ENCODE measurements at regions of chr19 and their contacts with region 1.

Region 1: DNA sequence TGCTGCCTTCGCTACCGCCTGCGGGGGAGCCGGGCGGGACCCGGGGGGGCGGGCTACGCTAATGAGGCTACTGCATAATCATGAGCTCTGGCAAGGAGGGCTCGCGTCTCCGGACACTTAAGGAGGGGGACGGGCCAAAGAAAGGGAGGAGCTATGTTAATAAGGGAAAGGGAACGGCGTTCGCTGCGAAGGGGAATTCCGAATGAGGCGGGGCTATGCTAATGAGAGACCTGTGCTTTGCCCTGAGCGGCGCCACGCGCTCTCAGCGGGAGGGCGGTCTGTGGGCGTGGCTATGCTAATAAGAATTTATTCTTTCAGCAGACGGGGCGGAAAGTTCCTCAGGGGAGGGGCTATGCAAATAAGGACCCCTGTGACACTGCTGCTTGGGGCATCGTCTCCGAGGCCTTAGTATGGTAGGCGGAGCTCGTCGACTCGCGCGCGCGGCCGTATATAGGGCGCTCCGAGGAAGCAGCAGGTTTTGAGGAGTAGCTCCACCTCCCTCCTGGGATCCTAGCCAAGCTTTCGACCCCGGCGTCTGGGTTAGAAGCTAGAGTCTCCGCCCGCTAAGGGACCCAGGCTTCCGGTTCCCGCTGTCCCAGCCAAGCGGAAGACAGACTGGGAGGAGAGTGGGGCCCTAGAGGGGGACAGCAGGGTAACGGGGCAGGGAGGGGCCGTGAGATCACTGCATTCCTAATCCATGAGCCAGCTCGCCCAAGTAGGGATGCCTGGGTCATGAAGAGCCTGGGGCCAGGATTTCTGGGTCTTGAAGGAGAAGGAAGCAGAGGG is at the start of gene RRAS:
- DNase-seq: peak; percentile 100
- ATAC-seq: peak; percentile 75
- H3K4me3 Mint-ChIP-seq: peak within 1 kb of the TSS; percentile 92
- H3K27ac Mint-ChIP-seq: peak within 1 kb of the TSS; percentile 99
- H3K4me1 Mint-ChIP-seq: peaks cover 36% of the 10 kb centered on the region
- H3K27me3 Mint-ChIP-seq: no peaks in the 10 kb centered on the region
- CTCF ChIP-seq: no peak
- total RNA-seq, gene RRAS: 6.3 to 7.1 TPM

Region 2: GRCh38 chr19:49391581-49392399 is 248.5 kb before region 1 on chr19:
- CTCF ChIA-PET with region 1: no interaction called
- POLR2A ChIA-PET with region 1: no interaction called
- intact Hi-C with region 1: no loop called
- DNase-seq: peak; percentile 82
- ATAC-seq: peak; percentile 86
- H3K4me3 Mint-ChIP-seq: no peak overlapping the region
- H3K27ac Mint-ChIP-seq: peak overlapping the region; percentile 23
- H3K4me1 Mint-ChIP-seq: peaks cover 10% of the 10 kb centered on the region
- H3K27me3 Mint-ChIP-seq: no peaks in the 10 kb centered on the region
- CTCF ChIP-seq: peak; percentile 93

Region 3: DNA sequence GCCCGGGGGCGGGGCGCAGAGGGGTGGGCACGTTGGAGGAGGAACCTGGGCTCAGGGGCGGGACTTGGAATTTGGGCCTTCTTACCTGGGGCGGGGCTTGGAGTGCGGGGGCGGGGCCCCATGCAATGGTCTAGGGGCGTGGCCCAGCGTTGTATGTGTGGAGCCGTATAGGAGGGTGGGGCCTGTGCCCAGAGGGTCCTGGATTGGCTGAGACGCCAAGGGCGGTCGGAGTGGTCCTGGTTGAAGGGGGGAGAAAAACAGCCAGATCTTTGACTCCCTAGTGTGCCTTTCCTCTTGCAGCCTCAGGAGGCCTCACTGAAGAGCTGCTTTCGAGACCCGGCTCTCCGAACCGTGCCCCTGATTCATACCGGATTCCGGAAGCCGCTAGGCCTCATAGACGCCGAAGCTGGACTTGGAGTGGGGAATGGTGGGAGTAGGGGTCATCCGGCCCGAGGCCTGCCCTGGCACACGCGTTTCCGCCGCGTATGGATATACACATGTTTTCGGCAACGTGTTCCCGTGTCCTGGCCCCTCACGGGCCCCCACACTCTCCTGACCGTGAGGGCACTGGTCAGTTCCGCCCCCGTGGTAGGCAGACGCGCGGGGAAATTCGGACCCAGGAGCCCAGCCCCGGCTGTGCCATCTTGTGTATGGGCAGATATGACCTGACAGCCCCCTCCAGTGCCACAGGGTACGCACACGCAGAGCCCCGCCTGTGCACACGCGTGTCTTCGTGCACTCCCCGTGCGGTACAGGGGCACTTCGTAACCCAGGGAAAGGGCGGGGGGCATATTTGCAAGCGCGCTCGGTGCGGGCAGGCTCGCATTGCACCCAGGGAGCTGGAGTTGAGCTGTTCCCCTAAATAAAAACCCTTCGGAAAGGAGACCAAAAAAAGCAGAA is 50.0 kb before region 1 on chr19:
- CTCF ChIA-PET with region 1: interaction called, 5 read pairs
- POLR2A ChIA-PET with region 1: interaction called, 8 read pairs
- intact Hi-C with region 1: loop called (anchors 2 kb)
- DNase-seq: peak; percentile 99
- ATAC-seq: peak; percentile 77
- H3K4me3 Mint-ChIP-seq: peak overlapping the region; percentile 77
- H3K27ac Mint-ChIP-seq: peak overlapping the region; percentile 92
- H3K4me1 Mint-ChIP-seq: peaks cover 23% of the 10 kb centered on the region
- H3K27me3 Mint-ChIP-seq: no peaks in the 10 kb centered on the region
- CTCF ChIP-seq: peak; percentile 25

Region 4: GRCh38 chr19:49665351-49666119 is 25.2 kb after region 1 on chr19 and contains the starts of genes BCL2L12 and IRF3:
- CTCF ChIA-PET with region 1: interaction called, 3 read pairs
- POLR2A ChIA-PET with region 1: interaction called, 16 read pairs
- intact Hi-C with region 1: loop called (anchors 2 kb)
- DNase-seq: peak; percentile 99
- ATAC-seq: peak; percentile 89
- H3K4me3 Mint-ChIP-seq: peak within 1 kb of the TSS; percentile 94
- H3K27ac Mint-ChIP-seq: peak within 1 kb of the TSS; percentile 91
- H3K4me1 Mint-ChIP-seq: peaks cover 28% of the 10 kb centered on the region
- H3K27me3 Mint-ChIP-seq: no peaks in the 10 kb centered on the region
- CTCF ChIP-seq: no peak
- total RNA-seq, gene BCL2L12: 63.4 to 64.6 TPM
- total RNA-seq, gene IRF3: 90.8 to 108 TPM

Region 5: DNA sequence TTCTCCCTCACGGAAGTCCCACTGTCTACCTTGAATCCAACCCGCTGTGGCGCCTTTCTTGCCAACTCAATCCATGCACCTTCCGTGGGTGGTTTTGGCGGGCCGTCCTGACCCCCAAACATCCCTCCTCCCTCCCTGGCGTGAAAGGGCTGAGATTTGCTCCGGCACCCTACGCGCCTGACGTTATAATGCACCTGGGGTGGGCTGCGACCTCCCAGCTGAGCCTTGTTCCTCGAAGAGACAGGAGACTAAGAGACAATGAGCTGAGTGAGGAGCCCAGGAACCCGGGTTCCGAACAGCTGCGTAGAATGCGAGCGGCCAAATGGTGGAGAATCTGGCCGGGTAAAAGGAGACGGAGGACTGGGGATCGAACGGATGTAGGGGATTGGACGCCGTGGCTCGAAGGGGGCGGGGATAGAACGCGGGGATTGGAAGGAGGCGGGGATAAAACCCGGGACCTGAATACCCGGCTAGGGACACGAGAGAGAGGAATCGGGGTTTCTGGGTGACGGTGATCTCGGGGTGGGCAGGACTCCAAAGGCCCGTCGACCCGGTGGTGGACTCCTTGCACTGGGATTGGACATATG is 50.4 kb after region 1 on chr19 and contains the start of gene CPT1C:
- CTCF ChIA-PET with region 1: no interaction called
- POLR2A ChIA-PET with region 1: no interaction called
- intact Hi-C with region 1: no loop called
- DNase-seq: peak; percentile 60
- ATAC-seq: peak; percentile 63
- H3K4me3 Mint-ChIP-seq: peak within 1 kb of the TSS; percentile 60
- H3K27ac Mint-ChIP-seq: no peak within 1 kb of the TSS
- H3K4me1 Mint-ChIP-seq: peaks cover 26% of the 10 kb centered on the region
- H3K27me3 Mint-ChIP-seq: peaks cover 14% of the 10 kb centered on the region
- CTCF ChIP-seq: no peak
- total RNA-seq, gene CPT1C: 0.69 to 1.0 TPM

Measured in activated CD8-positive, alpha-beta T cell treated with anti-CD3 and anti-CD28 coated beads for 36 hours (primary cell).